CD8-positive, alpha-beta T cell (primary cell): ENCODE measurements at regions of chrX and their contacts with region 1.

Region 1: GRCh38 chrX:108091266-108091877 is at the starts of genes ATG4A and PSMD10:
- DNase-seq: peak; percentile 75 to 94 (median 87)
- ATAC-seq: peak; percentile 94
- H3K4me3 ChIP-seq: peak within 1 kb of the TSS; percentile 82 to 90
- H3K4me3 Mint-ChIP-seq: no peak within 1 kb of the TSS
- H3K27ac ChIP-seq: peak within 1 kb of the TSS; percentile 88 to 92
- H3K27ac Mint-ChIP-seq: no peak within 1 kb of the TSS
- H3K4me1 ChIP-seq: peaks cover 9% of the 10 kb centered on the region
- H3K4me1 Mint-ChIP-seq: peaks cover 24% of the 10 kb centered on the region
- H3K27me3 ChIP-seq: no peaks in the 10 kb centered on the region
- H3K27me3 Mint-ChIP-seq: no peaks in the 10 kb centered on the region
- CTCF ChIP-seq: no peak
- total RNA-seq, gene ATG4A: 3.7 to 6.3 TPM
- total RNA-seq, gene PSMD10: 22.6 to 23.5 TPM

Region 2: DNA sequence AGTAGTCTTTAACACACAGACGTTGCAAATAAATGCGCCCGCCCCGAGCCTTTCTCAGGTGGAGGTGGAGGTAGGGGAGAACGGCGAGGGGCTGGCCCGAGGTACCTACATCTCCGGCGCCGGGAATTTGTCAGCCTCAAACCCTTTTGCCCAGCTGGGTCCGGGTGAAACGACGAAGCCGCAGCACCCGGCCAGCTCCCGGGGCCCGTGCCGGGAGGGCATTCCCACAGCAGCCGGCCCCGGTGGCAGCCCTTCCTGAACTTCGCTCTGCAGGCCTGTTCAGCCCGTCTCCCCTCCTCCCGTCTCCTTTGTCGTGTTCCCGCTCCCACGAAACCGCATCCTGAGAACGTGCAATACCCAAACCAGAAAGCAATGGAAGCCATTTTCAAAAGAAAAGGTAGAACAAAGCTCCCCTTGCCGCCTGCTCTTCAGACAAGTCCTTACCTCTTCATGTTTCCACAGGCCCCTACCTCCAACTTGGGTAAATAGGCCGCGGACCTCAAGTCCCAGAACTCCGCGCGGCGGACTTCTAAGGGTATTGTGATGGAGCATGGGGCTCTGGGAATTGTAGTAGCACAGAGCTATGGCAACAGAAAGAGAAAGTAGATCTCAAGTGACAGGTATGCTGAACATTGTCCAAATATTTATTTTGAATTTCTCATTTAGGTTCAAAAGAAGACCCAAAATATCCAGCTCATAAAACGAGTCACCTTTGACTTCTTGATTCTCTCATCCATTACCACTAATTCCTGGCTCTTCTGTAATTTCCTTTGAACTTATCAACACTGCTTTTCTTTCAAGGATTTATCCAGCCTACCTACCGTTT is 972.8 kb before region 1 on chrX and contains the start of gene RBM41:
- CTCF ChIA-PET with region 1: no interaction called
- POLR2A ChIA-PET with region 1: no interaction called
- intact Hi-C with region 1: loop called (anchors 1 to 2 kb)
- DNase-seq: peak; percentile 46 to 87 (median 72)
- ATAC-seq: peak; percentile 99
- H3K4me3 ChIP-seq: peak within 1 kb of the TSS; percentile 68 to 70
- H3K4me3 Mint-ChIP-seq: peak within 1 kb of the TSS; percentile 95
- H3K27ac ChIP-seq: peak within 1 kb of the TSS; percentile 49 to 77
- H3K27ac Mint-ChIP-seq: peak within 1 kb of the TSS; percentile 95
- H3K4me1 ChIP-seq: peaks cover 11% of the 10 kb centered on the region
- H3K4me1 Mint-ChIP-seq: peaks cover 37% of the 10 kb centered on the region
- H3K27me3 ChIP-seq: no peaks in the 10 kb centered on the region
- H3K27me3 Mint-ChIP-seq: no peaks in the 10 kb centered on the region
- CTCF ChIP-seq: no peak
- total RNA-seq, gene RBM41: 6.9 to 7.8 TPM

Region 3: DNA sequence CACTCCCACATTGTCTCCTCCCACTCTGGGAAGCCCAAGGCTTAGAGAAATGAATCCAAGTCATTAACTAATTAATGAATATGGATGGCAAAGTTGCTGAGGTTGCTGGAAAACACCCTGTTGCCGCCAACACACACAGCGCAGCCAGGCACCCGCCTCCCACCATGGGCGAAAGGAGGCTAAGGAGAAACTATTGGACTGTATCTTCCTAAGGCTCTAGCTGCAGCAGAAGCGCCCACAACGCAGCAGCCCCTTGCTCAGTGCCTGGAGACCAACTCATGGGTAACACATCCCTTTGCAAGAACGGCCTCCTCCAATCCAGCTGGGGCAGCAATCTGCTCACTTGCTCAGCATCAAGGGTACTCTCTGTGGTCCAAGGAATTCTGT is 350.0 kb before region 1 on chrX:
- CTCF ChIA-PET with region 1: no interaction called
- POLR2A ChIA-PET with region 1: interaction called, 3 read pairs
- intact Hi-C with region 1: loop called in 1 of 2 experiments (anchors 1 kb)
- DNase-seq: peak in 1 of 9 experiments; percentile 22
- ATAC-seq: peak; percentile 6
- H3K4me3 ChIP-seq: peak overlapping the region; percentile 29
- H3K4me3 Mint-ChIP-seq: peak overlapping the region; percentile 80
- H3K27ac ChIP-seq: peak overlapping the region; percentile 68 to 73
- H3K27ac Mint-ChIP-seq: peak overlapping the region; percentile 97
- H3K4me1 ChIP-seq: peaks cover 48% of the 10 kb centered on the region
- H3K4me1 Mint-ChIP-seq: peaks cover 44% of the 10 kb centered on the region
- H3K27me3 ChIP-seq: no peaks in the 10 kb centered on the region
- H3K27me3 Mint-ChIP-seq: no peaks in the 10 kb centered on the region
- CTCF ChIP-seq: no peak

Region 4: DNA sequence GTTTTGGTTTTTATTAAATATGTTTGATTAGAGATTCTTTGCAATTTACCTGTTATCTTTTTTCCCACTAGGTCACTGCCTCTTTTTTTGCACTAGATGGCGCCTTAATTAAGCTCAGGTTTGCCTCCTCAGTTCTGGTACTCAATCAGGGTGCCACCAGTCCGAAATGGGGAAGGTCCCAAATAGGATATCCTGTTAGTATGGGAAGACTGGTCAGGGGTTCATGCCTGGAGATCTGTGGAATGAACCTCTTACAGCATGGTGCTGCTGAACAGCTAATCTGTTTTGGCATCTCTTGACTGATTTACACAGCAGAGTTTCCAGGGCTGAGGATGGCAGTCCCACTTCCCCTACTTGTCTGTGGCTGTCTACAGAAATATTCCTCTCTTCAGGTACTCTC is 70.7 kb before region 1 on chrX:
- CTCF ChIA-PET with region 1: no interaction called
- POLR2A ChIA-PET with region 1: interaction called, 6 read pairs
- intact Hi-C with region 1: loop called in 1 of 2 experiments (anchors 5 kb)
- DNase-seq: peak in 5 of 9 experiments; percentile 0 to 51 (median 28)
- ATAC-seq: no peak
- H3K4me3 ChIP-seq: peak overlapping the region in 1 of 2 experiments; percentile 17
- H3K4me3 Mint-ChIP-seq: peak overlapping the region; percentile 83
- H3K27ac ChIP-seq: peak overlapping the region; percentile 10 to 19
- H3K27ac Mint-ChIP-seq: peak overlapping the region; percentile 97
- H3K4me1 ChIP-seq: peaks cover 45% of the 10 kb centered on the region
- H3K4me1 Mint-ChIP-seq: peaks cover 70% of the 10 kb centered on the region
- H3K27me3 ChIP-seq: no peaks in the 10 kb centered on the region
- H3K27me3 Mint-ChIP-seq: no peaks in the 10 kb centered on the region
- CTCF ChIP-seq: no peak